ENCODE measurements at regions of chr19 and their contacts with region 1.

Region 1: DNA sequence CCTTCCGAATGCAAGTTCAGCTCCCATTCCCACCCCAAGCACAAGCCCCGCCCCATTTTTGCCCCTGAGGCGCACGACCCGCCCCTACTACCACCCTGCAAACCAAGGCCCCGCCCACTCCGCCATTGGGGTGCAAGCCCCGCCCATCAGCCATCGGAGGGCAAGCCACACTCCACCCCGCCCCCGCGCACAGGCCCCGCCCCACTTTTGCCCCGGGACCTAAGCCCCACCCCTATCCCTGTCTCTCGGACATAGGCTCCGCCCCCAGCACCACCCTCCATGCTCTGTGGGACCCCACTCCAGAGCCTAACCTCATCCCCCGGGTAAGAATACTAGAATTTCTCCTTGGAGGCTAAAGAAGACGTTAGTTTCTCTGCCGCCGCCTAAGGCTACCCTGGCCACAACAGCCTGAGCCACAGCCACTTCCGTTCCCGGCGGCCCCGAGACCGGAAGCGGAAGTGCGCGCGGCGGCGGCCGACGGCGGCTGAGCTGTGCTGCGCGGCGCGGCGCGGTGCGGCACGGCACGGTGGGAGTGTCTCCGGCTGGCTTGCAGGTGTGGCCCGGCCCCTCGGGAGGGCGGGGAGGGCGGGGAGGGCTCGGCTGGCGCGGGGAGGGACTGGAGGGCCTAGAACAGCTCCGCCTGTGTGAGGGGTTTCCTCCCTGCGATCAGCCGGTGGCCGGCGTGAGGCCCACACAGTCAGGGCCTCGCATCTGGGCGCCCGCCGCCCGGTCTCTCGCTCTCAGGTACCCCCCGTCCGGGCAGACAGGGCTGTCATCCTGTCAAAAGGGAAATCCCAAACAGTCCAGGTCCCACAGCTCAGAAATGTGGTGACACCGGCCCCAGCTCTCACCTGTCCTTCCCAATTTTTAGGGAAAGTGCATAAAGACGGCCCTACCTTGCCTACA is at the start of gene ZNF333:
- DNase-seq: peak; percentile 68
- ATAC-seq: peak; percentile 98
- H3K4me3 ChIP-seq: peak within 1 kb of the TSS; percentile 96
- H3K27ac ChIP-seq: peak within 1 kb of the TSS; percentile 95
- H3K4me1 ChIP-seq: peaks cover 8% of the 10 kb centered on the region
- H3K27me3 ChIP-seq: no peaks in the 10 kb centered on the region
- CTCF ChIP-seq: no peak
- EP300 ChIP-seq: peak in 1 of 2 experiments; percentile 27; a peak in 1 of 4 replicates
- POLR2A ChIP-seq: peak; percentile 91
- RAD21 ChIP-seq: no peak
- polyA plus RNA-seq, gene ZNF333: 2.3 to 2.9 TPM

Region 2: GRCh38 chr19:14556662-14557188 is 133.1 kb before region 1 on chr19:
- CTCF ChIA-PET with region 1: interaction called, 51 read pairs
- POLR2A ChIA-PET with region 1: interaction called, 5 read pairs
- RAD21 ChIA-PET with region 1: interaction called, 11 read pairs
- SMC1A ChIA-PET with region 1: interaction called, 21 read pairs
- in situ Hi-C with region 1: no loop called
- intact Hi-C with region 1: no loop called
- DNase-seq: no peak
- ATAC-seq: peak; percentile 98
- H3K4me3 ChIP-seq: no peak overlapping the region
- H3K27ac ChIP-seq: no peak overlapping the region
- H3K4me1 ChIP-seq: peaks cover 9% of the 10 kb centered on the region
- H3K27me3 ChIP-seq: no peaks in the 10 kb centered on the region
- CTCF ChIP-seq: peak; percentile 90 to 98 (median 97)
- EP300 ChIP-seq: no peak
- POLR2A ChIP-seq: no peak
- RAD21 ChIP-seq: peak; percentile 48

Region 3: GRCh38 chr19:14595516-14595915 is 94.3 kb before region 1 on chr19:
- CTCF ChIA-PET with region 1: interaction called, 25 read pairs
- POLR2A ChIA-PET with region 1: interaction called, 4 read pairs
- RAD21 ChIA-PET with region 1: interaction called, 6 read pairs
- SMC1A ChIA-PET with region 1: interaction called, 10 read pairs
- in situ Hi-C with region 1: no loop called
- intact Hi-C with region 1: no loop called
- DNase-seq: no peak
- ATAC-seq: no peak
- H3K4me3 ChIP-seq: peak overlapping the region; percentile 27; the same call in 1 of the 2 replicates
- H3K27ac ChIP-seq: no peak overlapping the region
- H3K4me1 ChIP-seq: peaks cover 3% of the 10 kb centered on the region; the same call in 1 of the 2 replicates
- H3K27me3 ChIP-seq: no peaks in the 10 kb centered on the region
- CTCF ChIP-seq: no peak
- EP300 ChIP-seq: no peak
- POLR2A ChIP-seq: no peak
- RAD21 ChIP-seq: no peak

Region 4: DNA sequence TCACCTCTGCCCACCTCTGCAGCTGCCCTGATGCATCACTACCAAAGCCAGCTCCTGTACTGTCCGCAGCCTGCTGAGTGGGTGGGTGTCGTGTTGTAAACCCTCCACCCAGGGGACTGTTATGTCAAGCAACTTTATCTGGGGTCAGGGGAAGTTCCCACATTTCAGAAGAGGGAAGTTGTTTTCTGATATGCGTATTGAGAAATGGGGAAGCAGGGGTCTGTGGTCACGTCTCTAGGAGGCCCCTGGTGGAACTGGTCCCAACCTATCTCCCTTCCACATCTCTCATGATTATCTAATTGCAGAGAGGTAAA is 75.8 kb before region 1 on chr19:
- CTCF ChIA-PET with region 1: interaction called, 10 read pairs
- POLR2A ChIA-PET with region 1: interaction called, 11 read pairs
- RAD21 ChIA-PET with region 1: interaction called, 28 read pairs
- SMC1A ChIA-PET with region 1: interaction called, 31 read pairs
- in situ Hi-C with region 1: no loop called
- intact Hi-C with region 1: loop called (anchors 10 kb)
- DNase-seq: peak; percentile 38
- ATAC-seq: peak; percentile 89
- H3K4me3 ChIP-seq: no peak overlapping the region
- H3K27ac ChIP-seq: peak overlapping the region; percentile 49
- H3K4me1 ChIP-seq: peaks cover 20% of the 10 kb centered on the region
- H3K27me3 ChIP-seq: no peaks in the 10 kb centered on the region
- CTCF ChIP-seq: no peak
- EP300 ChIP-seq: peak; percentile 37 to 52; a peak in 2 of 4 replicates
- POLR2A ChIP-seq: peak; percentile 59; the same call in 1 of the 2 replicates
- RAD21 ChIP-seq: no peak

Region 5: DNA sequence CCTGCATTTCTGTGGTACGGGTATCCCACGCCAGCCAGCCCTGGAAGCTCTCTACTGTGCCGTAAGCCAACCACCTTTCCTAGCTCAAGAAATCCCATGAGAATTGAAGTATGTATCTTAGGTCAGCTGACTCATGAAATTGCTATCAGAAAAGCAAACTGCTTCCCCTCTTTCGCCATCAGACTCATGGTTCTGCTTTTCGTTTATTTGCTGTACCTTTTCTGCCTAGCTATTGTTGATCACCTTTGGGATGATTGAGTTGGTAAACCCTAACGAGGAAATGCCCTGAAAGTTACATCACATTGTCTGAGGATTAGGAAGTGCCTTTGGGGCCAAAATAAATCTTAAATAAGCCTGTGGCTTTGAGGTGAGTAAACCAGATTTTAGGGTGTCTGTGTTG is 15.1 kb before region 1 on chr19 and contains the start of gene ADGRE3:
- CTCF ChIA-PET with region 1: interaction called, 104 read pairs
- POLR2A ChIA-PET with region 1: interaction called, 11 read pairs
- RAD21 ChIA-PET with region 1: interaction called, 70 read pairs
- SMC1A ChIA-PET with region 1: interaction called, 144 read pairs
- in situ Hi-C with region 1: no loop called
- intact Hi-C with region 1: no loop called
- DNase-seq: no peak
- ATAC-seq: peak; percentile 46; the same call in 2 of the 3 replicates
- H3K4me3 ChIP-seq: no peak within 1 kb of the TSS
- H3K27ac ChIP-seq: no peak within 1 kb of the TSS
- H3K4me1 ChIP-seq: no peaks in the 10 kb centered on the region; the same call in 1 of the 2 replicates
- H3K27me3 ChIP-seq: no peaks in the 10 kb centered on the region
- CTCF ChIP-seq: no peak
- EP300 ChIP-seq: no peak
- POLR2A ChIP-seq: no peak
- RAD21 ChIP-seq: no peak
- polyA plus RNA-seq, gene ADGRE3: 0.04 to 0.05 TPM